ENCODE measurements at regions of chrX and their contacts with region 1.

Region 1: GRCh38 chrX:21004835-21005234 is 369.4 kb upstream of the CNKSR2 start:
- DNase-seq: no peak
- ATAC-seq: no peak
- H3K4me3 Mint-ChIP-seq: no peak overlapping the region
- H3K27ac Mint-ChIP-seq: no peak overlapping the region
- H3K4me1 Mint-ChIP-seq: no peaks in the 10 kb centered on the region
- H3K27me3 Mint-ChIP-seq: no peaks in the 10 kb centered on the region
- CTCF ChIP-seq: no peak

Region 2: DNA sequence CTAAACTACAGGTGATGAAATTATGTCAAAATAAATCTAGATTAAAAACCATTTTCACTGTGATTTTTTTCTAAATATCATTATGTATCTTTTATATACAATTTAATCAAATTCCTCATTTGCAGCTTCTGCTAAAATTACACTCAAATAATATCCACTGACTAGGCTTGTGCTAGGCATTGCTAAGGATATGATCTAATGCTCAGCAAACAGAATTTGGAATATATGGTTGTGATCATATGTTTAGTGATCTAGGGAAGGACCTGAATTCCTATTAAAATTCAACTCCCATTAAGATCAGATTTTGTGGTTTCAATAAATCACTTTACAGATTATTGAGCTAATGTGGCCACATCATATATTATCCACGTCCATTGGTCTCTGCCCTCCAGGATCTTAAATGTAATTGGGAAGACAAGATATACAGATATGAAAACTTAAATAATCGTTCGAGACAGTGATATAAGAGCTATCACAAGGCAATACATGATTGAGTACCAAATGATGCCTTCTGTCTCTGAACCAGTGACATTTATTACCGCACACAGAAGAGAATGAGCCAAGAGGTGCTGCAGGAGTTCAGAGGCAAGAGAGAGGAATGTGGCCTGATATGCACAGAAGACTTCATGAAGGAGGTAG is 532.1 kb before region 1 on chrX:
- CTCF ChIA-PET with region 1: no interaction called
- POLR2A ChIA-PET with region 1: interaction called, 10 read pairs
- intact Hi-C with region 1: no loop called
- DNase-seq: no peak
- ATAC-seq: no peak
- H3K4me3 Mint-ChIP-seq: no peak overlapping the region
- H3K27ac Mint-ChIP-seq: no peak overlapping the region
- H3K4me1 Mint-ChIP-seq: no peaks in the 10 kb centered on the region
- H3K27me3 Mint-ChIP-seq: no peaks in the 10 kb centered on the region
- CTCF ChIP-seq: no peak

Region 3: GRCh38 chrX:20693078-20693477 is 311.8 kb before region 1 on chrX:
- CTCF ChIA-PET with region 1: no interaction called
- POLR2A ChIA-PET with region 1: no interaction called
- intact Hi-C with region 1: no loop called
- DNase-seq: no peak
- ATAC-seq: no peak
- H3K4me3 Mint-ChIP-seq: no peak overlapping the region
- H3K27ac Mint-ChIP-seq: no peak overlapping the region
- H3K4me1 Mint-ChIP-seq: no peaks in the 10 kb centered on the region
- H3K27me3 Mint-ChIP-seq: no peaks in the 10 kb centered on the region
- CTCF ChIP-seq: no peak

Measured in activated B cell treated with CpG ODN at 0.5 μM for 24 hours (primary cell).